ENCODE measurements at regions of chr4 and their contacts with region 1.

Region 1: DNA sequence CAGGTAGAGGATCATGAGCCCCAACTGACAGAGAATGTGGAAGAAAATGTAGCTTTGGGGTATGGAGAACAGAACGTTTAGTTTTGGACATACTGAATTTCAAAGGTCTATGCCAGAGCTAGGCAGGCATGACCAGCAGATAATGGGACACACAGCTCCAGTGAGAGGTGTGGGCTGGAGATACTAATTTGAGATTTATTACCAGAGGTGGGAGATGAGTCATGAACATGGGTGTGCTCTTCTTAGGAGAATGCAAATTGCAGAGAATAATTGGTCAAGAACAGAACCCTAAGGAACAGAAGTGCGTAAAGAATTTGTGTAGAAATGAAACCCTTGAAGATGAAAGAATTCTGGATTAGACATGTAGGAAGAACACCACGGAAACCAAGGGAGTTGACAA is 125.2 kb downstream of the PACRGL start:
- DNase-seq: no peak
- H3K4me3 ChIP-seq: no peak overlapping the region
- H3K27ac ChIP-seq: no peak overlapping the region
- H3K4me1 ChIP-seq: no peaks in the 10 kb centered on the region
- H3K27me3 ChIP-seq: no peaks in the 10 kb centered on the region
- CTCF ChIP-seq: no peak

Region 2: DNA sequence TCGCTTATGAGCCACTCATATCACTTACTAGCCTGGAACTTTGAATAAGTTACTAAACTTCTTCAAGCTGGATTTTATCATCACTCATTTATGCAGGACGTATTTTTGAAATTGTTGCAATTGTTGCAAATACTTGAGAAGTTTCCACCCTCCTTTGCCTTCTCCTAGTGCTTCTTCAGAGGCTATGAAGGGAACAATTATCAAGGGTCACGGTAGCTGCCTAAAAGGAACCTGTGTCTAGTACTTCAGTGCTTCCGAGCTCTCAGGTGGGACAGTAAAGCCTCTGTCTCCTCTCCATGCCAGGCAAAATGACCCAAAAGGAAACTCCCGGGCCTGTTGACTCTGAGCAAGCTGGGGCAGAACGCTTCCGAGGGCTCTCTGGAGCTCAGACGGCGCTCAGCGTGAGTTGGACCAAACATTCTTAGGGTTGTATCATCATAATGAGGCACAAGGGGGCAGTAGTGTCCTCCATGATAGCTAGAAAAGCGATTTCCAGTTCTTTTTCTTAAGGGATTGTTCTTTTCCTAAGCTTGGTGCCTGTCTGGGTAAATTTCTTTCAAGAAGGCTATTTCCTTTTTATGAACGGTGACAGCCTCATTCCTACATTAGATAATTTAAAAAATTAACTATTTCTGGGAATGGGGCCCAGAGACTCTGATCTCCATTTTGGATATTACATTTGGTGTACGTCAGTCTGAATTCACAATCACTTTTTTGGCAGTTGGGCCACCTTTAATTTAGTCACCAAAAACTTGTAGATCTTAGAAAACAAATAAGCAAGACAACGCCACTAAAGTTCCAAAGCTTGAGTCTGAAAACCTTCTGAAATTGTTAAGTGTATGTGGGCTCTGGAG is 52.1 kb before region 1 on chr4:
- CTCF ChIA-PET with region 1: interaction called, 10 read pairs
- dilution Hi-C with region 1: no loop called
- in situ Hi-C with region 1: no loop called
- intact Hi-C with region 1: no loop called
- DNase-seq: peak; percentile 53
- H3K4me3 ChIP-seq: no peak overlapping the region
- H3K27ac ChIP-seq: no peak overlapping the region
- H3K4me1 ChIP-seq: no peaks in the 10 kb centered on the region
- H3K27me3 ChIP-seq: no peaks in the 10 kb centered on the region
- CTCF ChIP-seq: peak; percentile 69 to 76

Region 3: DNA sequence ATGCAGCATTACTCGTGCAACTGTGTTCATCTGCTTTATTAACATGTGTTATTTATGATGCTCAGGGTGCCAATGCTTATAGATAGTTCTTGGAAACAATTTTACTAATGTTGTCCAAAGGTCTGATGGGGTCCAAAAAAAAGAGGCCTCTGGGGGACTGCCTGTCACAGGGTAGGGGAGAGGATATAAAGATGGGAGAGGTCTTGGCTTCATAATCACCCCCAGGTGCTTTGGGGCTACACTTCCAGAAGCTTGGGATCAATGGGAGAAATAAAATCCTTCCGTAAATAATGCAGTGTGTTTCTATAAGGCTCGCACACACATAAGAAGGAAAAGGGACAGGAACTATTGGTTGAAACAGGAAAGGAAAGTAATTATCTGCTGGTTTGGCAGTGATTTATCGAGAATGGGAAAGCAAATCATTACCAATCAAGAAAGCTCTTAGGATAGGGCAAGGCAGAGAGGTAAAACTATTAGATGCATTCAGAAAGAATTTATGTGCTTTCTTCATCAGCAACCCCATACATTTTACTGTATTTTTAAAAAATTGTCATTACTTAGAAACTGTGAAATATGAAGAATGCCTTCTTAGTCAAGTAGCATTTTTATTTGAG is 446.0 kb after region 1 on chr4:
- CTCF ChIA-PET with region 1: no interaction called
- dilution Hi-C with region 1: no loop called
- in situ Hi-C with region 1: no loop called
- intact Hi-C with region 1: no loop called
- DNase-seq: no peak
- H3K4me3 ChIP-seq: no peak overlapping the region
- H3K27ac ChIP-seq: no peak overlapping the region
- H3K4me1 ChIP-seq: no peaks in the 10 kb centered on the region
- H3K27me3 ChIP-seq: no peaks in the 10 kb centered on the region
- CTCF ChIP-seq: no peak